Activated CD4-positive, alpha-beta memory T cell treated with anti-CD3 and anti-CD28 coated beads for 36 hours (primary cell): ENCODE measurements at regions of chr11 and their contacts with region 1.

Region 1: DNA sequence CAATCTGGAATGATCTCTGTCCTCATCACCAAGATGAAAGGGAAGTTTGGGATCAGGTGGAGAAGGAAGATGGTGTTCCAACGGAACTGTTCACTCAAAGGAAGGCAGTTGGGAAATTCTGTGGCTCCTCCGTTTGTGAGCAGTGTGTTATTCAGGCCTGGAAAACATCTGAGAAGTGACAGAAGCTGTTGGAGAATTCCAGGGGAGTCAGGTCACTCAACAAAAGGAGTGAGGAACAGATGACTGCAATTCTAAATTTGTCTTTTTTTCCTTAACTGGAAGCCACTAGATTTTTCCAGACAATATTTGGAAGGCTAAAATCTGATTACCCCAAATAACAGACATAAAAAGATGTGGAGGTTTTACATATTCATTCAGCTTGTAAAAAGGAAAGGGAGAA is 107.8 kb downstream of the CD44 start:
- DNase-seq: no peak
- H3K4me3 Mint-ChIP-seq: no peak overlapping the region
- H3K27ac Mint-ChIP-seq: peak overlapping the region; percentile 6
- H3K4me1 Mint-ChIP-seq: peaks cover 50% of the 10 kb centered on the region
- H3K27me3 Mint-ChIP-seq: no peaks in the 10 kb centered on the region

Region 2: GRCh38 chr11:35272391-35272902 is 25.7 kb after region 1 on chr11:
- CTCF ChIA-PET with region 1: no interaction called
- POLR2A ChIA-PET with region 1: no interaction called
- intact Hi-C with region 1: loop called (anchors 2 kb)
- DNase-seq: peak; percentile 74
- H3K4me3 Mint-ChIP-seq: peak overlapping the region; percentile 38
- H3K27ac Mint-ChIP-seq: peak overlapping the region; percentile 80
- H3K4me1 Mint-ChIP-seq: peaks cover 44% of the 10 kb centered on the region
- H3K27me3 Mint-ChIP-seq: peaks cover 4% of the 10 kb centered on the region